IMR-90 (cell line): ENCODE measurements at regions of chr5 and their contacts with region 1.

Region 1: GRCh38 chr5:139658928-139659667 is 10.9 kb downstream of the CXXC5 start:
- DNase-seq: peak; percentile 77
- ATAC-seq: peak; percentile 19
- H3K4me3 ChIP-seq: peak overlapping the region; percentile 3; the same call in 1 of the 2 replicates
- H3K27ac ChIP-seq: peak overlapping the region; percentile 95
- H3K4me1 ChIP-seq: peaks cover 64% of the 10 kb centered on the region
- H3K27me3 ChIP-seq: no peaks in the 10 kb centered on the region
- CTCF ChIP-seq: no peak
- POLR2A ChIP-seq: no peak
- RAD21 ChIP-seq: no peak; the same call in 1 of the 2 replicates

Region 2: DNA sequence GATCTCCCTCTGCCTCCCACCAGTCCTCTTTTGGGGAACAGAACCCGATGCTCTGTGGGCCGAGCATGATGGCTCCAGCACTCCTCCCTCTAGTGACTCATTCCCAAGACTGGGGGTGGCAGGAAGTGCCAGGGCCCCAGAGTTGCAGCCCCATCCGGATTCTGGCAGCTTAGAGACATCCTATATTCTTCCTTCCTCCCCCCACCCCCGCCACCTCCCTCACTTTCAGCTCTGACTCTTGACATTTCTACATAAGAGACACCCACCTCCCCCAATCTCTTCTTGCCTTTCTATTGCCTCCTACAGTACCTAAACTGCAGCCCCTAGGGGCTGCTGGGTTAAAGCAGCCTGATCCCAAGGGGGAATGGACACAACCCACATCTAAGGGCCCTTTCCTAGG is 412.7 kb before region 1 on chr5:
- CTCF ChIA-PET with region 1: no interaction called
- POLR2A ChIA-PET with region 1: no interaction called
- dilution Hi-C with region 1: no loop called
- in situ Hi-C with region 1: no loop called
- intact Hi-C with region 1: no loop called
- DNase-seq: peak; percentile 60
- ATAC-seq: peak; percentile 89
- H3K4me3 ChIP-seq: no peak overlapping the region
- H3K27ac ChIP-seq: peak overlapping the region; percentile 38
- H3K4me1 ChIP-seq: peaks cover 5% of the 10 kb centered on the region
- H3K27me3 ChIP-seq: peaks cover 3% of the 10 kb centered on the region
- CTCF ChIP-seq: no peak
- POLR2A ChIP-seq: no peak
- RAD21 ChIP-seq: no peak

Region 3: DNA sequence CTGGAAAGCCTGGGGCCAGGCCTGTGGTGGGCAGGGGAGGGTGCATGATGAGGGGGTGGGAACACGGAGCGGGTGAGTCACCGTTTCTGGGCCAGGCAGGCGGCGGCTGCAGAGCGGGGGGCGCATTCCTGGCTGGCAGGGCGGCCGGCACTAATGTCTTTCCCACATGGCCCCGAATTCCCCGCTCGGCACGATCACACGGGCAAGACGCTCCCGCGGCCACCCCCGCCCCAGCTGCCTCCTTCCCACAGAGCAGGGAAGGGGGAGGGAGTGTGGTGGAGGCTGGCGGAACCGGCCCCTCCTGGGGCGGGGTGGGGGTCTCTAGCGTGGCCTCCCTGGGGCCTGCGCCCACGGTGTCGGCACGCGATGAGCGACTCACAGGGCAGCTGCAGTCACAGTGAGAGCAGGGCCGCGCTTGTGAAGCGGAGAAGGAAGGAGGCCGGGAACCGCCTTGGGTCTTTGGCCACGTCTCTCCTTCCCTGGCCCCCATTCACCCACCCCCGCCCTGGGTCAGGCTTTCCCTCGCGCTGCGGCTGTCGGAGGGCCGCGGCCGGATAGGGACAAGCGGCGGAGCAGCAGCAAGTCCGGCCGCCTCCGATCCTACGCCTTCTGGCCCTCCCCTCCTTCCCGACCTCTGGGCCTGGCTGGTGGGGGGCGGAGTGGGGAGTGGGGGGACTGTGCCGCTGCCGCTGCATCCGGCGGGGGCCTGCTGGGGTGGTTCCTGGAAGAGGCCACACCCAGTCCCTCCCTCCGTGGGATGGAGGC is 38.0 kb after region 1 on chr5:
- CTCF ChIA-PET with region 1: no interaction called
- POLR2A ChIA-PET with region 1: no interaction called
- dilution Hi-C with region 1: no loop called
- in situ Hi-C with region 1: no loop called
- intact Hi-C with region 1: loop called (anchors 2 kb)
- DNase-seq: peak; percentile 91
- ATAC-seq: peak; percentile 68
- H3K4me3 ChIP-seq: peak overlapping the region; percentile 11
- H3K27ac ChIP-seq: peak overlapping the region; percentile 90
- H3K4me1 ChIP-seq: peaks cover 39% of the 10 kb centered on the region
- H3K27me3 ChIP-seq: no peaks in the 10 kb centered on the region
- CTCF ChIP-seq: no peak
- POLR2A ChIP-seq: peak; percentile 56
- RAD21 ChIP-seq: no peak; the same call in 1 of the 2 replicates

Region 4: GRCh38 chr5:139828207-139828895 is 169.3 kb after region 1 on chr5:
- CTCF ChIA-PET with region 1: no interaction called
- POLR2A ChIA-PET with region 1: no interaction called
- dilution Hi-C with region 1: no loop called
- in situ Hi-C with region 1: no loop called
- intact Hi-C with region 1: no loop called
- DNase-seq: no peak
- ATAC-seq: no peak
- H3K4me3 ChIP-seq: no peak overlapping the region
- H3K27ac ChIP-seq: no peak overlapping the region
- H3K4me1 ChIP-seq: no peaks in the 10 kb centered on the region
- H3K27me3 ChIP-seq: peaks cover 39% of the 10 kb centered on the region
- CTCF ChIP-seq: no peak
- POLR2A ChIP-seq: no peak
- RAD21 ChIP-seq: no peak

Region 5: GRCh38 chr5:140609126-140609525 is 950.0 kb after region 1 on chr5:
- CTCF ChIA-PET with region 1: no interaction called
- POLR2A ChIA-PET with region 1: no interaction called
- dilution Hi-C with region 1: no loop called
- in situ Hi-C with region 1: no loop called
- intact Hi-C with region 1: no loop called
- DNase-seq: no peak
- ATAC-seq: no peak
- H3K4me3 ChIP-seq: no peak overlapping the region
- H3K27ac ChIP-seq: no peak overlapping the region
- H3K4me1 ChIP-seq: peaks cover 2% of the 10 kb centered on the region; the same call in 1 of the 2 replicates
- H3K27me3 ChIP-seq: peaks cover 6% of the 10 kb centered on the region
- CTCF ChIP-seq: no peak
- POLR2A ChIP-seq: no peak
- RAD21 ChIP-seq: no peak